ENCODE measurements at regions of chr22 and their contacts with region 1.

Region 1: GRCh38 chr22:30005213-30005857 is 74.9 kb upstream of the HORMAD2 start:
- DNase-seq: peak; percentile 82
- H3K4me3 ChIP-seq: no peak overlapping the region
- H3K27ac ChIP-seq: no peak overlapping the region
- H3K4me1 ChIP-seq: peaks cover 13% of the 10 kb centered on the region
- H3K27me3 ChIP-seq: no peaks in the 10 kb centered on the region
- CTCF ChIP-seq: peak; percentile 98

Region 2: GRCh38 chr22:29635734-29636357 is 369.5 kb before region 1 on chr22:
- CTCF ChIA-PET with region 1: interaction called, 18 read pairs
- POLR2A ChIA-PET with region 1: no interaction called
- intact Hi-C with region 1: loop called (anchors 2 kb)
- DNase-seq: peak; percentile 76
- H3K4me3 ChIP-seq: no peak overlapping the region
- H3K27ac ChIP-seq: no peak overlapping the region
- H3K4me1 ChIP-seq: peaks cover 17% of the 10 kb centered on the region
- H3K27me3 ChIP-seq: peaks cover 9% of the 10 kb centered on the region
- CTCF ChIP-seq: peak; percentile 78

Region 3: DNA sequence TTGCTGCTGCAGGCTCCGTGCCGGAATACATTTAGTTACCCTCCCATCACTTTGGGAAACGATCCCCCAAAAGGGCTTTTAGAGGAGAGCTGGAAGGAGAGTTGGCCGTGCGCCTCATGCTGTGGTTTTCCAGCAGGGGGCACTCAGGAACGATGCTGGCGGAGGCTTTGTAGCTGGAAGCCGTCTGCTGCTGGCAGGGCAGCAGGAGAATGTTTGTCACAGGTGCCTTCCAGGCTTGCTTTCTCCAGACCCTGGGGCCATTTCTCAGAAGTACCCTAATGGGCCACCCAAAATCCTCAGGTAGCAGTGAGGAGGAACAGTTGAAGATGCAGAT is 315.5 kb before region 1 on chr22:
- CTCF ChIA-PET with region 1: interaction called, 18 read pairs
- POLR2A ChIA-PET with region 1: no interaction called
- intact Hi-C with region 1: loop called (anchors 2 kb)
- DNase-seq: peak; percentile 86
- H3K4me3 ChIP-seq: peak overlapping the region; percentile 13
- H3K27ac ChIP-seq: peak overlapping the region; percentile 71
- H3K4me1 ChIP-seq: peaks cover 63% of the 10 kb centered on the region
- H3K27me3 ChIP-seq: no peaks in the 10 kb centered on the region
- CTCF ChIP-seq: peak; percentile 91

Region 4: GRCh38 chr22:29772170-29772641 is 233.1 kb before region 1 on chr22:
- CTCF ChIA-PET with region 1: no interaction called
- POLR2A ChIA-PET with region 1: no interaction called
- intact Hi-C with region 1: loop called (anchors 10 kb)
- DNase-seq: peak; percentile 61
- H3K4me3 ChIP-seq: no peak overlapping the region
- H3K27ac ChIP-seq: no peak overlapping the region
- H3K4me1 ChIP-seq: no peaks in the 10 kb centered on the region
- H3K27me3 ChIP-seq: no peaks in the 10 kb centered on the region
- CTCF ChIP-seq: peak; percentile 64

Region 5: DNA sequence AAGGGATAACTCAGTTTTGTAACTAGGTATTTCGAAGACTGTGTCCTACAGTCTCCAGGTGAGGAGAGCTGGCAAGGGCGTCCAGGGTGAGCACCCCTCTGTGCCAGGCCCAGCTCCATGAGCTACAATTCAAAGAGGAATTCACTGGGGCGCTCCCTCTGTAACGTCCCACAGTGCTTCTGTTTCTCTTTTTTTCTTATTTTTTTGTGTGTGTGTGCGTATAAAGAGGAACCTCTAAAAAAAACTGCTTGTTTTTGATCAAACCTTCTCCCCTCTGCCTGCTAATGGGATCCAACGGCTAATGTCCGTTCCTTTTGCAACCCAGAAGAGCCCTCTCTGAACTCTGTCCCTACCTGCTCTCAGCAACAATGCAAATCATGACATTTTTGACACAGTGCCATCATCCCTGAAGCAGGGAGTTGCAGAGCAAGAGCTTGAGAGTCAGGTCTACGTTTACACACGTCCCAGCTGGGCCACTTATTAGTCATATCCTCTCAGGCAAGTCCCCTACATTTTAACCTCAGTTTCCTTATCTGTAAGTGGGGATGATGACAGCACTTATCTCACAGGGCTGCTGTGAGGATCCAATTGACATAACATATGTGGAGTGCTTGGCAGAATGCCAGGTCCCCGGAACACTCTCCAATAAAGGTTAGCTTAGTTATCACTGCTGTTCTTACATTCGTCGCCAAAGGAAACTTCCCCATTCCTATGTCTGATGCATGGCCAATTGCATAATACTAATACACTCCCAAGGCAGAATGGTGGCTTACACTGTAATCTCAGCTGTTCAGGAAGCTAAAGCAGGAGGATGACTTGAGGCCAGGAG is 184.2 kb before region 1 on chr22:
- CTCF ChIA-PET with region 1: interaction called, 5 read pairs
- POLR2A ChIA-PET with region 1: no interaction called
- intact Hi-C with region 1: loop called (anchors 10 kb)
- DNase-seq: peak; percentile 81
- H3K4me3 ChIP-seq: no peak overlapping the region
- H3K27ac ChIP-seq: no peak overlapping the region
- H3K4me1 ChIP-seq: no peaks in the 10 kb centered on the region
- H3K27me3 ChIP-seq: no peaks in the 10 kb centered on the region
- CTCF ChIP-seq: no peak

Region 6: DNA sequence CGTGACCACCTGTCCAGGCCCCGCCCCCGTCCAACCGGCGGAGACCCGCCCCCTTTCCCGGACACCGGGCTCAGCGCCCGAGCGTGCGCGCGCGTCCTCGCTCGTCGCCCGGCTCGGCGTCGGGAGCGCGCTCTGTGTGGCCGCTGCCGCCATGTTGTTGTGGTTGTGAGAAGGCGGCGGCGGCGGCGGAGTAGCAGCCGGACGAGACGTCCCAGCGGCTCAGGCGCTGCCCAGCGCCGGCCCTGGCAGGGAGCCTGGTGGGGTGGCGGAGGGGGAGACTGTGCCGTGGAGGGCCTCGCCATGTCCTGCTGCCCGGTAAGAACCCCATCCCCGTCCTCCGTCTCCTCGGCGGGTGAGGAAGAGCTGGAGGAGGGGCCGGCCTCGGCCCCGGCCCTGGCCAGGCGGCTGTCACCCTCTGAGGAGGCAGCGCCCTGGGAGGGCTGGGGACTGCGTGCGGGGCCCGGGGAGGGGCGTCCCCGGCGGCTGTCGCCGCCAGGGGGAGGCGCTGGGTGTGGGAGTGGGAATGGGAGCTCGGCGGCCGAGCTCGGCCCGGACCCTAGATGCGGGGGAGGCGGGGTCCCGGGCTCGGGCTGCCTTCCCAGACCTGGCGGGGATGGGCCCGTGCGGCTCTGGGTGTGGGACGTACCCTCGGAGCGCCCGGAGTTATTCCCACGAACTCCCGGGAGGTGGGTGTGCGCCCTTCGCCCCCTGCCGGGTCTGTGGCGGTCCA is 122.1 kb before region 1 on chr22 and contains the start of gene MTMR3:
- CTCF ChIA-PET with region 1: interaction called, 22 read pairs
- POLR2A ChIA-PET with region 1: no interaction called
- intact Hi-C with region 1: no loop called
- DNase-seq: peak; percentile 93
- H3K4me3 ChIP-seq: peak within 1 kb of the TSS; percentile 97
- H3K27ac ChIP-seq: peak within 1 kb of the TSS; percentile 93
- H3K4me1 ChIP-seq: peaks cover 22% of the 10 kb centered on the region
- H3K27me3 ChIP-seq: no peaks in the 10 kb centered on the region
- CTCF ChIP-seq: peak; percentile 41; the same call in 1 of the 2 replicates
- total RNA-seq, gene MTMR3: 25.0 and 26.4 TPM in 2 replicates

Region 7: GRCh38 chr22:30265823-30266444 is 260.6 kb after region 1 on chr22:
- CTCF ChIA-PET with region 1: no interaction called
- POLR2A ChIA-PET with region 1: no interaction called
- intact Hi-C with region 1: no loop called
- DNase-seq: no peak
- H3K4me3 ChIP-seq: no peak overlapping the region
- H3K27ac ChIP-seq: no peak overlapping the region
- H3K4me1 ChIP-seq: no peaks in the 10 kb centered on the region
- H3K27me3 ChIP-seq: no peaks in the 10 kb centered on the region
- CTCF ChIP-seq: no peak

Measured in A673 (cell line).